ENCODE measurements at regions of chrX and their contacts with region 1.

Region 1: GRCh38 chrX:47233337-47234113 is 716 bp downstream of the USP11 start:
- DNase-seq: peak; percentile 97
- H3K4me3 Mint-ChIP-seq: peak overlapping the region; percentile 87
- H3K27ac Mint-ChIP-seq: peak overlapping the region; percentile 98
- H3K4me1 Mint-ChIP-seq: peaks cover 20% of the 10 kb centered on the region
- H3K27me3 Mint-ChIP-seq: peaks cover 3% of the 10 kb centered on the region

Region 2: GRCh38 chrX:46788902-46789301 is 444.6 kb before region 1 on chrX:
- intact Hi-C with region 1: no loop called
- DNase-seq: no peak
- H3K4me3 Mint-ChIP-seq: no peak overlapping the region
- H3K27ac Mint-ChIP-seq: no peak overlapping the region
- H3K4me1 Mint-ChIP-seq: peaks cover 10% of the 10 kb centered on the region
- H3K27me3 Mint-ChIP-seq: no peaks in the 10 kb centered on the region

Region 3: DNA sequence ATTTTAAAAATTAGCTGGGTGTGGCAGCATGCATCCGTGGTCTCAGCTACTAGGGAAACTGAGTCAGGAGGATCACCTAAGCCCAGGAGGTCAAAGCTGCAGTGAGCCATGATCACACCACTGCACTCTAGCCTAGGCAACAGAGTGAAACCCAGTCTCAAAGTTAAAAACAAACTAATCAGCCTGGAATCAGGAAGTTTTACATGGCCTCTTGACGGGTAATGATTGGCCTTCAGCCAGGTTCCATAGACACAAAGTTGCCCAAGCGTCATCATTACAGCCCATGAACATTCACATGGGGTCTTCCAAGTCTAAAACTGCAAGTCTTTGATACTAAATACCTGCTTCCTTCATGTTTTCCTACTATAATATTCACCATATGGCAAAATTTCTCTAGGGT is 165.3 kb before region 1 on chrX:
- intact Hi-C with region 1: no loop called
- DNase-seq: no peak
- H3K4me3 Mint-ChIP-seq: no peak overlapping the region
- H3K27ac Mint-ChIP-seq: no peak overlapping the region
- H3K4me1 Mint-ChIP-seq: no peaks in the 10 kb centered on the region
- H3K27me3 Mint-ChIP-seq: peaks cover 2% of the 10 kb centered on the region

Region 4: DNA sequence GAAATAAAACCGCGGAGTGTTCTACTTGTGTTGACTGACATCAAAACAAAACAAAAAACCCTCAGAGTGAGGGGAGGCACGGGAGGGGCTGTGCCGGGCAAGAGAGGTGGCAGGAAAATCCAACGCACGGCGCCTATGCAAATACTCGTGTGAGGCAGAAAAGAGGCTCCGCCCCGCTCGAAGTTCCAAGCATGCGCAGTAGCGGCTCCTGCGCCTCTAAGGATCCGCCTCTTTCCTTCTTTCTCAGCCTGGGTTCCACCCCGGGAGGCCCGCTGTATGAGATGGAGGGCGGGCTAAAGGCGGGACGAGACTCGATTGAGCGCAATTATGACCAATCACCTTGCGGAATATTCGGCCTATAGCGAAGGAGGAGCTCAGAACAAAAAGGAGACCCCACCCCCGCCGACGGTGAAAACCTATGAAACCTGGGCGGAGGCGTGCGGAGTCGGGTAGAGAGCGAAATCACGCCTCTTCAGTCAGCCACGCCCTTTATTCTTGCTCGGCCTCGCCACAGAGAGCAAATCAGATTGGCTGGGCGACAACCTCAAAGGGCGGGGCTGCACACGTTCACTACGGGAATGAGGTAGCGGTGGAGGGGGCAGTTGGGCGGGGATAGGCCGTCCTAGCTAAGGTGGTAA is 15.8 kb before region 1 on chrX:
- intact Hi-C with region 1: loop called (anchors 1 kb)
- DNase-seq: peak; percentile 98
- H3K4me3 Mint-ChIP-seq: peak overlapping the region; percentile 92
- H3K27ac Mint-ChIP-seq: peak overlapping the region; percentile 99
- H3K4me1 Mint-ChIP-seq: peaks cover 37% of the 10 kb centered on the region
- H3K27me3 Mint-ChIP-seq: no peaks in the 10 kb centered on the region

Region 5: DNA sequence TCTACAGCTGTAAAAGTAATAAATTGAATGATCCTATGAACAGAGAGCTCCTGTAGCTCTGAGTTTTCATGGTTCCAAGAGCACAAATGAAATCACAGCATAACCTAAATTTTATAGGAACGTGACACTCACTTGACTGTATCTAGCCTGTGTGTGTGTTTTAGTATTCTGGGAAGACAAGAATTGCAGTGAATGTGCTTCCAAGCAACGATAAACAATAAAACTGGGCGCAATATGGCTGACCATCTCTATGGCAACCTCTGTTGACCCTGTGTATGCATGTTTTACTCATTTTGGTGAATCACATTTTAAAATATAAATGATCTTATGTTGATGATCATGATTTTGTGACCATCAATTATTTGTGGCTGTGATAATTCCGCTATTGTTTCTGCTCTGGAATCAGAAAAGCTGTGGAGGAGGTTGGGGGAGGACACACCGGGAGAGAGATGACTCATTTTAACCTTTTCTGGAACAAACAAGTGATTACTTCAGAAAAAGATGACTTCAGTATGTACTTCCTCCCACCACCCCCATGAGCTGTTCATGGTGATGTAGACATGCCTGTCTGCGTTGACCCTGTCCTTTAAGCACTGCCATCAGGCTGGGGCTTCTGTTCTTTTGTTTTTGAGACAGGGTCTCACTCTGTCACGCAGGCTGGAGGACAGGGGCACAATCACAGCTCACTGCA is 31.1 kb after region 1 on chrX:
- intact Hi-C with region 1: loop called (anchors 5 kb)
- DNase-seq: peak; percentile 56
- H3K4me3 Mint-ChIP-seq: peak overlapping the region; percentile 6
- H3K27ac Mint-ChIP-seq: peak overlapping the region; percentile 89
- H3K4me1 Mint-ChIP-seq: peaks cover 18% of the 10 kb centered on the region
- H3K27me3 Mint-ChIP-seq: no peaks in the 10 kb centered on the region

Region 6: DNA sequence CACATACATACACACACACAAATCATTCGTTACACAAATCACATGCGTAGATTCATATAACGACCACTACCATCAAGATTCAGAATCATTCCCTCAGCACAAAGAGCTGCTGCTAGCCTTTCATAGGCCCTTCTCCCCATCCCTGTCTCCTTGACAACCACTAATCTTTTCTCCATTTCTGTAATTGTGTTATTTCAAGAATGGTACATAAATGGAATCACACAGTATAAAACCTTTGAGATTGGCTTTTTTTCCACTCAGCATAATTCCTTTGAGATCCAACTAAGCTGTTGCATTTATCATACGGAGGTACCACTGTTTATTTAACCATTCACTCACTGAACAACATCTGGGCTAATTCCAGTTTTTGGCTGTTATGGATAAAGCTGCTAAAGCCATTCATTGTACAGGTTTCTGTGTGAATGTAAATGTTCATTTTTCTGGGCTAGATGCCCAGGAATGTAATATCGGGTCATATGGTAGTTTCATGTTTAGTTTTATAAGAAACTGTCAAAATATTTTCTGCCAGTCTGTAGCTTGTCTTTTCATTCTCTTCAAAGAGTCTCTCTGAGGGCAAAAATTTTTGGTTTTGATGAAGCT is 63.3 kb after region 1 on chrX:
- intact Hi-C with region 1: no loop called
- DNase-seq: no peak
- H3K4me3 Mint-ChIP-seq: no peak overlapping the region
- H3K27ac Mint-ChIP-seq: no peak overlapping the region
- H3K4me1 Mint-ChIP-seq: no peaks in the 10 kb centered on the region
- H3K27me3 Mint-ChIP-seq: peaks cover 2% of the 10 kb centered on the region

Region 7: DNA sequence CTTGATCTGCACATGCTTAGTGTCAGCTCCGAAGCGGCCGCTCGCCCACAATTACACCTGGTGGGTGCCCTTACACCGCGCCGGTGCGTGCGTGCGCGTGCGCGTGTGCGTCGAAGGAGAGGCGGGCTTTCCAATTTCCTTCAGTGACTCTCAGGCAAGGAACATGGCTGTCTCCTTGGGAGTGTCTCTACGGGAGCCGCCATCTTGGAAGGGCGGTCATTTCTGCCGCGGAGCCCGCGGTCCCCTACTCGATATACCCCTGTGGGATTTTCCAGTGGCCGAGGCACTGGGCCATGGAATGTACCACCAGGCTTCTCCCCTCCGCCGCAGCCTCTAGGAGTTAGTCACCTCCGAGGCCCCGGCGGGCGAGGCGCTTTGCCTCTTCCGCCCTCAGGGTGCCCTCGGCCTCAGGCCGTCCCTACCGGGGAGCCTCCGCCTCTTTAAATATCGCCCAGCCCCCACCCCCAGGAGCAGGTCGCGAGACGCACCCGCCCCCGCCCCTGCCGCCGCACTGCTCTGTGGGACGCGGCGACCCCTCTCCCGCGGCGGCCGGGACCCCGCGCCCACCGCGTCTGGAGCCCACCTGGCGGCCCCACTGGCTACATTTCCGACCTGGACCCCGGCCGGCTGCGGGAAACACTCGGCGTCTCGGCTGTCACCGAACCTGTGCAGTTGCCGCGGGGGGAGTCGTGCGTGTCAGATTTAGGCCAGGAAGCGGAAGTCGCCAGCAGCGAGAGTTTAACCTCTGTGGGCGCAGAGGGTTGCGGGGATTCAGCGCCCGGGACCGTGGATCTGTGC is 249.2 kb after region 1 on chrX and contains the start of gene ZNF41:
- intact Hi-C with region 1: loop called (anchors 2 kb)
- DNase-seq: peak; percentile 90
- H3K4me3 Mint-ChIP-seq: peak within 1 kb of the TSS; percentile 97
- H3K27ac Mint-ChIP-seq: peak within 1 kb of the TSS; percentile 90
- H3K4me1 Mint-ChIP-seq: peaks cover 17% of the 10 kb centered on the region
- H3K27me3 Mint-ChIP-seq: no peaks in the 10 kb centered on the region
- total RNA-seq, gene ZNF41: 10.0 and 10.5 TPM in 2 replicates

Measured in activated CD4-positive, alpha-beta T cell treated with anti-CD3 and anti-CD28 coated beads, Interleukin-2, amount 10 ng/mL, durations not matched to agents 24 days and 14 days (primary cell).